ENCODE measurements at regions of chr13 and their contacts with region 1.

Region 1: GRCh38 chr13:112942689-112943308 is 26.2 kb upstream of the MCF2L start:
- DNase-seq: peak; percentile 89
- H3K4me3 Mint-ChIP-seq: peak overlapping the region; percentile 93
- H3K27ac Mint-ChIP-seq: peak overlapping the region; percentile 60
- H3K4me1 Mint-ChIP-seq: peaks cover 8% of the 10 kb centered on the region
- H3K27me3 Mint-ChIP-seq: peaks cover 34% of the 10 kb centered on the region

Region 2: GRCh38 chr13:112392719-112393118 is 550.1 kb before region 1 on chr13:
- intact Hi-C with region 1: no loop called
- DNase-seq: no peak
- H3K4me3 Mint-ChIP-seq: no peak overlapping the region
- H3K27ac Mint-ChIP-seq: no peak overlapping the region
- H3K4me1 Mint-ChIP-seq: no peaks in the 10 kb centered on the region
- H3K27me3 Mint-ChIP-seq: peaks cover 5% of the 10 kb centered on the region

Region 3: DNA sequence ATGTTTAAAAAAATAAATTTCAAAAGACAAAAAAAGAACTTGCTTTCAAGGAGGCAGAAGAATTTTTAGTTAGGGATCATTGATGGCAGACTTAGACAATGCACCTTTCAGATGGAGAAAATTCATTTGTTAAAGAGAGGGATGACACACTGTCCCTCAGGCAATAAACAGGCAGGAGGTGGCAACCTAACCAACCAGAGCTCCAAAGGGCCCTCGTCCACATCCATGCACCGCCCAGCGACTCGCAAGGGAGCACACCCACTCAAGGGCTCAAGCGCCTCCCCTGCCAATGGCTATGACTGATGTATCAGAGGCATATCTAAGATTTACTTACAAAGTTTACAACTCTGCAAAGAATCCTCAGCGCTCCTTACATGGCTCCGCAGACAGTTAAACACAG is 436.7 kb before region 1 on chr13:
- intact Hi-C with region 1: no loop called
- DNase-seq: no peak
- H3K4me3 Mint-ChIP-seq: no peak overlapping the region
- H3K27ac Mint-ChIP-seq: no peak overlapping the region
- H3K4me1 Mint-ChIP-seq: peaks cover 6% of the 10 kb centered on the region
- H3K27me3 Mint-ChIP-seq: no peaks in the 10 kb centered on the region

Region 4: GRCh38 chr13:112689303-112690165 is 253.3 kb before region 1 on chr13 and contains the start of gene ATP11A:
- intact Hi-C with region 1: loop called (anchors 2 kb)
- DNase-seq: peak; percentile 81
- H3K4me3 Mint-ChIP-seq: peak within 1 kb of the TSS; percentile 84
- H3K27ac Mint-ChIP-seq: peak within 1 kb of the TSS; percentile 94
- H3K4me1 Mint-ChIP-seq: peaks cover 59% of the 10 kb centered on the region
- H3K27me3 Mint-ChIP-seq: no peaks in the 10 kb centered on the region
- total RNA-seq, gene ATP11A: 90.4 and 97.8 TPM in 2 replicates

Region 5: DNA sequence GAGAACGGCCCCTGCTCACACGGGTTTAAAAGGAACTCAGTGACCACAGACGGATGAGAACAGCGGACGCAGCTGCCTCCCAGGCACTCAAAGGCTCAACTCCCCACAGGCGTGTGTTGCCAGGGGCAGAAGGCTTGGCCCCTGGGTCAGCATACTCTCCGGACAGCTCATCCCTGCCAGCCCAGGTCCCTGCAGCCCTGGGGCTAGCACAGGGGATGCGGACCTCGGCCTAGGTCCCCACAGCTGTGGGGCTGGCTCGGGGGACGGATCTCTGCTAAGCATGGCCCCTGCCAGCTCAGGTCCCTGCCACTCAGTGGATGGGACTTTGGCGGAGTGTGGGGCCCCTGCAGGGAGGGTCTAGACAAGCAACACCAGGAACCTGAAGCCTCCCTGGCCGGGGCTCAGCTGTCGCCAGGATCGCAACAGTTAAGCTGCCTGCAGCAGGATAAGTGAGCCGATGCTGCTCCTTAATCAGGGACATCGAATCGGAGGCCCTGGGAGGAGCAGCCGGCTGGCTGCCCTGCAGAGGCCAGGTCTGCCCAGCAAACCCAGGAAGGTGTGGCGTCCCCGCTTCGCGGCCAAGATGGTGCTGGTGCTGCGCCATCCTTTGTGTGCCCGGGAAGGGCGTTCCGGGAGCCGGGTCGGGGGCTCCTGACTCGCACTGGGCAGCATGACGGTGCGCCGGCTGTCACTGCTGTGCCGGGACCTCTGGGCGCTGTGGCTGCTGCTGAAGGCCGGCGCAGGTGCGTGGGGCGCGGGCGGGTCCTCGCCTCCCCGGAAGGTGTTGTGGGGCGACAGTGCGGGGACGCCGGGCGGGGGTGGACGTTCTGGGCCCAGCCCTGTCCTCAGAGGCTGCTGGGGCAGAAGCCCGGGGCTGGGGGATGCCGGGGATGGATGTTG is 58.7 kb after region 1 on chr13:
- intact Hi-C with region 1: no loop called
- DNase-seq: no peak
- H3K4me3 Mint-ChIP-seq: no peak overlapping the region
- H3K27ac Mint-ChIP-seq: no peak overlapping the region
- H3K4me1 Mint-ChIP-seq: no peaks in the 10 kb centered on the region
- H3K27me3 Mint-ChIP-seq: peaks cover 8% of the 10 kb centered on the region

Region 6: GRCh38 chr13:113110048-113110851 is 167.5 kb after region 1 on chr13:
- intact Hi-C with region 1: loop called (anchors 10 kb)
- DNase-seq: no peak
- H3K4me3 Mint-ChIP-seq: no peak overlapping the region
- H3K27ac Mint-ChIP-seq: no peak overlapping the region
- H3K4me1 Mint-ChIP-seq: no peaks in the 10 kb centered on the region
- H3K27me3 Mint-ChIP-seq: peaks cover 6% of the 10 kb centered on the region

Region 7: DNA sequence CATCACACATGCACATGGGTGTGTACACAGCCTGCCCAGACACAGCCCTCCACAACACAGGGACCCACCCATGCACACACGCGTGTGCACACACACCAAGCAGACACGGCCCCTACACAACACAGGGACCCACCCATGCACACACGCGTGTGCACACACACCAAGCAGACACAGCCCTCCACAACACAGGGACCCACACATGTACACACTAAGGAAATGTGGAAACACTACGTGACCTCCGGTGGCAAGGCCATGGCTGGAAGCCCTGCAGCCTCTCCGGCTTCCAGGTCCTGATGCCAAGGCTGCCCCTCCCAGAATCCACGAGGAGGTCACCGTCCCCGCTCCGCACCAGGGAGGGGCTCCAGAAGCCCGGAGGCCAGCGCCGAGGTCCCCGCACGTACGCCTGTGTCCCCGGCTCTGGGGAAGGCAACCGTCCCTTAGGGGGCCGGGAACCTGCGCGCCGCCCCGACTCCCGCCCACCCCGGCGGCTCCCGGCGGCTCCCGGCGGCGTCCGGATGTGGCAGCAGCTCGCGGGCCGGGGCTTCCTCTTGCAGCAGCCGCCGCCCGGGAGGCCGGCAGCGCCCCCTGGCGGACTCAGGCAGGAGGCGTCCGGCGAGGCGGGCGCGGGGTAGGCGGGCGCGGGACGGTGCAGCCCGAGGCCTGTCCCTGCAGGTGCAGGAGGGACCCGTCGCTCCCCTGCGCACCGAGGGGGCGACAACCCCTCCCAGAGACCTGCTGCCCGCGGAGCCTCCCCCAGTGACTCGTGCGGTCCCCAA is 451.0 kb after region 1 on chr13:
- intact Hi-C with region 1: loop called (anchors 1 kb)
- DNase-seq: peak; percentile 80
- H3K4me3 Mint-ChIP-seq: peak overlapping the region; percentile 89
- H3K27ac Mint-ChIP-seq: peak overlapping the region; percentile 66
- H3K4me1 Mint-ChIP-seq: peaks cover 5% of the 10 kb centered on the region
- H3K27me3 Mint-ChIP-seq: peaks cover 10% of the 10 kb centered on the region

Region 8: DNA sequence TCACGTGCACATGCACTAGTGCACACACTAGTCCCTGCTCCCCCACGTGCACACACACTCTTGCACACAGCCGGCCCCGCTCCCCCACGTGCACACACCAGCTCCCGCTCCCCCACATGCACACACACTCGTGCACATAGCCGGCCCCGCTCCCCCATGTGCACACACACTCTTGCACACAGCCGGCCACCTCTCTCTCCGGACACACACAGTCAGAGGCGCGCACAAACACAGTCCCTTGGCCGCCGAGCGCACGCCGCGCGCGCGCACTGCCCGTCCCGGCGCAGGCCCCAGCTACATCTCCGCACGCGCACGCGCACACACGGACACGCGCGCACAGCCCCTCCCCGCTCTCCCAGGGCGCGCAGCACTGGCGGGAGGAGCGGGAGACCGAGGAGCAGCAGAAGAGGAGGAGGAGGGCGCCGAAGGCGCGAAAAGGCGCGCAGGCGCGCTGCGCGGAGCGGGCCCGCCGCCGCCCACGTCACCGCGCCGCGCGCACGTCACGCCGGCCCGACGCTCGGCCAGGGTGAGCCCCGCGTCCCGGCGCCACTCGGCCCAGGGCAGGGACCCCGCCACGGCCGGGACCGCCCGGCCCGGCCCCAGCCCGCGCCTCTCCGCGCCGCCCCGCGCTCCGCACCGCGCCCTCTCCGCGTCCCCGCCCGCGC is 641.5 kb after region 1 on chr13 and contains the start of gene TFDP1:
- intact Hi-C with region 1: loop called (anchors 10 kb)
- DNase-seq: peak; percentile 86
- H3K4me3 Mint-ChIP-seq: peak within 1 kb of the TSS; percentile 90
- H3K27ac Mint-ChIP-seq: peak within 1 kb of the TSS; percentile 89
- H3K4me1 Mint-ChIP-seq: peaks cover 36% of the 10 kb centered on the region
- H3K27me3 Mint-ChIP-seq: peaks cover 9% of the 10 kb centered on the region
- total RNA-seq, gene TFDP1: 171 and 173 TPM in 2 replicates